ENCODE measurements at regions of chr16 and their contacts with region 1.

Region 1: DNA sequence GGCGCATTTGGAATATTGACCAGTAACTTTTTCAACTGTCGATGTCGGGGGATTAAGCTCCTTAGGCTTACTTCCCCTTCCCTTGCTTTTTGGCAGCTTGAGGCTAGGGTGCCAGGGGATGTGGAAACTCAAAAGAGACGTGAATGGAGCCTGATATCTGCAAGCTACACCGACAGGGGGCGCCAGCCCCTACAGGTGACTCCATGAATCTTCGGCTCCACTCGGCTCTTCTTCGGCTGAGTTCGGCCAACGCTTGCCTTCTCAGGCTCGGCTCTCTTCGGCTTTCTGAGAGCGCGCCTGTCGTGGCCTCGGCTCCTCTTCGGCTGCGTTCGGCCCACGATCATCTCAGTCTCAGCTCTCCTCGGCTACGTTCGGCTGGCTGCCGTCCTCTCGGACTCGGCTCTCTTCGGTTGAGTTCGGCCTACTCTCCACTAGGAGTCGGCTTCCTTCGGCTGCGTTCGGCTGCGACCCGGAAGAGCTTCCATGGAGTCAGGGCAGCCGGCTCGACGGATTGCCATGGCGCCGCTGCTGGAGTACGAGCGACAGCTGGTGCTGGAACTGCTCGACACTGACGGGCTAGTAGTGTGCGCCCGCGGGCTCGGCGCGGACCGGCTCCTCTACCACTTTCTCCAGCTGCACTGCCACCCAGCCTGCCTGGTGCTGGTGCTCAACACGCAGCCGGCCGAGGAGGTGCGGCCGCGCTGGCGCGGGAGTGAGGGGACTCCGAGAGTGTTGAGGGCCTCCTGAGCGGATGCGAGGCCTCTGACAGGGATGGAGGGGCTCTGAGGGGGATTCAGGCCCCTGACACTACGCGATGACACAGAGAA is at the start of gene ERCC4:
- DNase-seq: peak; percentile 99 to 100
- ATAC-seq: peak; percentile 94 to 99 (median 94)
- H3K4me3 ChIP-seq: peak within 1 kb of the TSS; percentile 78
- H3K4me3 Mint-ChIP-seq: peak within 1 kb of the TSS; percentile 99
- H3K27ac ChIP-seq: peak within 1 kb of the TSS; percentile 63
- H3K27ac Mint-ChIP-seq: peak within 1 kb of the TSS; percentile 96
- H3K4me1 ChIP-seq: peaks cover 15% of the 10 kb centered on the region
- H3K4me1 Mint-ChIP-seq: peaks cover 28 to 33% of the 10 kb centered on the region in 2 donors
- H3K27me3 ChIP-seq: no peaks in the 10 kb centered on the region
- H3K27me3 Mint-ChIP-seq: peaks cover 4 to 9% of the 10 kb centered on the region in 2 donors
- CTCF ChIP-seq: peak; percentile 91
- total RNA-seq, gene ERCC4: 7.3 to 11.9 (median 7.5) TPM

Region 2: GRCh38 chr16:14249291-14250032 is 329.6 kb after region 1 on chr16:
- intact Hi-C with region 1: loop called (anchors 5 kb)
- DNase-seq: peak; percentile 20 to 71
- ATAC-seq: peak in 2 of 3 donors; percentile 38 to 48
- H3K4me3 ChIP-seq: no peak overlapping the region
- H3K4me3 Mint-ChIP-seq: no peak overlapping the region
- H3K27ac ChIP-seq: no peak overlapping the region
- H3K27ac Mint-ChIP-seq: no peak overlapping the region
- H3K4me1 ChIP-seq: no peaks in the 10 kb centered on the region
- H3K4me1 Mint-ChIP-seq: no peaks in the 10 kb centered on the region
- H3K27me3 ChIP-seq: no peaks in the 10 kb centered on the region
- H3K27me3 Mint-ChIP-seq: no peaks in the 10 kb centered on the region
- CTCF ChIP-seq: peak; percentile 77

Region 3: DNA sequence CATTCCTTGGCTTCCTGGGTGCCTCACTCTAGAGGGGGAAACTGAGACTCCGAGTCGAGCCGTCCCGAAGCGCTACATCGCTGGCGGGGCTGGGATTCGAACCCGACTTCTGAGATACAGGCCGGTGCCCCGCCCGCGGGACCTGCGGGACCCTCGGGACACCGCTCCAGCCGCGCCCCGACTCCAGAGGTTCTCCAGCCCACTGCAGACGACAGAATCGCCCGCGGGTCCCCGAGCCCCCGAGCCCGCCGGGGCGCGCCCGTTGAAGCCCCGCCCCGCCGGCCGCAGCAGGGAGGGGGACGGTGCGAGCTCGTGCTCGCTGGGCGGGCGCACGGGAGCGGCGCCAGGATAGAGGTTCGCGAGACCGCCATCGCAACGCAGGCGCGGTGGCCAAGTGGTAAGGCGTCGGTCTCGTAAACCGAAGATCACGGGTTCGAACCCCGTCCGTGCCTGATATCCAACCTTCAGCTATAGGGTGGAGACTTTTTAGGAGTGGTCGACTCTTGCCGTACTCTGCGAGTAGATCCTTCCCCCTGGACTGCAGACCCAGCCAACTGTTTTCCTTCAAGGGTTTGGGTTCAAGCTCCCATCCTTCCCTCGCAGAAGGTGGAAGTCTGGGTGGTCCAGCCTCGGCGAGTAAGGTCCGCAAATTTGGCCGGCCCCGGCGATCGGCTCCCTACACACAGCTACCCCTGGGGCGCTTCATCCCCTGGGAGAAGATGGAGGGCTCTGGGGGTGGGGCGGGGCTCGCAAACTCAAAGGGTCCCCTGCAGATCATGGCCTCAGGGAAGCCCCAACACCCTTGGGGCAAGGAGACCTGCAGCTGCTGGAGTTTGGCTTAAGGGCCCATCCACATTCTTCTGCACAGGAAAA is 365.9 kb after region 1 on chr16:
- intact Hi-C with region 1: loop called (anchors 1 kb)
- DNase-seq: peak; percentile 97 to 98
- ATAC-seq: peak; percentile 84 to 88 (median 86)
- H3K4me3 ChIP-seq: peak overlapping the region; percentile 98
- H3K4me3 Mint-ChIP-seq: peak overlapping the region; percentile 92
- H3K27ac ChIP-seq: peak overlapping the region; percentile 56
- H3K27ac Mint-ChIP-seq: peak overlapping the region; percentile 90 to 93
- H3K4me1 ChIP-seq: peaks cover 17% of the 10 kb centered on the region
- H3K4me1 Mint-ChIP-seq: peaks cover 23 to 36% of the 10 kb centered on the region in 2 donors
- H3K27me3 ChIP-seq: no peaks in the 10 kb centered on the region
- H3K27me3 Mint-ChIP-seq: no peaks in the 10 kb centered on the region
- CTCF ChIP-seq: no peak

Region 4: GRCh38 chr16:14529010-14529669 is 609.2 kb after region 1 on chr16:
- intact Hi-C with region 1: loop called (anchors 1 kb)
- DNase-seq: peak; percentile 21 to 76
- ATAC-seq: peak; percentile 50 to 56 (median 56)
- H3K4me3 ChIP-seq: no peak overlapping the region
- H3K4me3 Mint-ChIP-seq: no peak overlapping the region
- H3K27ac ChIP-seq: no peak overlapping the region
- H3K27ac Mint-ChIP-seq: no peak overlapping the region
- H3K4me1 ChIP-seq: peaks cover 3% of the 10 kb centered on the region
- H3K4me1 Mint-ChIP-seq: peaks cover 7 to 14% of the 10 kb centered on the region in 2 donors
- H3K27me3 ChIP-seq: no peaks in the 10 kb centered on the region
- H3K27me3 Mint-ChIP-seq: no peaks in the 10 kb centered on the region
- CTCF ChIP-seq: peak; percentile 57

Region 5: DNA sequence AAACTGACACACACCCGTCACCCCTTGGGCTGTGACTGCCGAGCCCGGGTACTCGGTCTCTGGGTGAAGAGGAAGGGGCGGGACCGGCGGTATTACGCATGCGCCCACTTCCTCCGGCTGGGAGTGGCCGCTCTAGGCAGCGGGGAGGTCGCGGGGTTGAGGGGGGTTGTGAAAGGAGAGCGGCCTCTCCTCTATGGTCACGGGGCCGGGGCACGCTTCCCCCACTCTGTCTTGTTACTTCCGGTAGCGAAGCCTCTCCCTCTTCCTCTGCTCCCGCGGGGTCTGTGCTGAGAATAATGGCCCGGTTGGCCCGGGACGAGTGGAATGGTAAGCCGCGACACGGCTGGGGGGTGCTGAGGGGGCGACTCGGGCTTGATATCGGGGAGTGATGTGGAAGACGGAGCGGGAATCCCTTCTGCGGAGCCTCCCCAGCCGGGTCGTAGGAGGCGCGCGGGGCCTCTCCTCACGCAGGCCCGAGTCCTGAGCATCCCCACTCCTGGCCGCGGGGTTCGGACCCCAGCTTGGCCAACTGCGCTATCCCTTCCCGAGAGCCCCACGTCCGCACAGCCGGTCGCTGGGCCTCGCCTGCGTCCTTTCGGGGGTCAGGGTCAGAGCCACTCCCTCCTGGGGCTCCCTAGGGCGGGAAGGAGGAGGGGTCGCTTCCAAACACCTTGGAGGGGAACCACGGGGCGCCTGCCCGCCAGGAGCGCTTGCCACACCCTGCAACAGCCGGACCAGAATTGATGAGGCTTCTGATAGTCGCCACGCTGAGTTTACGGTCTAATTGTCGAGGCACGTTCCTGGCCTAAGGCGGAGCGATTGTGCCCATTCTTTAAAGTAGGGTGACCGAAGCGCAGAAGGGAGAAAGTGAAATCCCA is 713.0 kb after region 1 on chr16 and contains the start of gene BFAR:
- intact Hi-C with region 1: loop called (anchors 5 kb)
- DNase-seq: peak; percentile 99
- ATAC-seq: peak; percentile 73 to 88 (median 75)
- H3K4me3 ChIP-seq: peak within 1 kb of the TSS; percentile 90
- H3K4me3 Mint-ChIP-seq: peak within 1 kb of the TSS; percentile 98
- H3K27ac ChIP-seq: peak within 1 kb of the TSS; percentile 92
- H3K27ac Mint-ChIP-seq: peak within 1 kb of the TSS; percentile 98 to 99
- H3K4me1 ChIP-seq: peaks cover 47% of the 10 kb centered on the region
- H3K4me1 Mint-ChIP-seq: peaks cover 44 to 59% of the 10 kb centered on the region in 2 donors
- H3K27me3 ChIP-seq: no peaks in the 10 kb centered on the region
- H3K27me3 Mint-ChIP-seq: no peaks in the 10 kb centered on the region
- CTCF ChIP-seq: no peak
- total RNA-seq, gene BFAR: 45.8 to 62.2 (median 55.6) TPM

Measured in natural killer cell (primary cell).